CD8-positive, alpha-beta T cell (primary cell): ENCODE measurements at regions of chr9 and their contacts with region 1.

Region 1: DNA sequence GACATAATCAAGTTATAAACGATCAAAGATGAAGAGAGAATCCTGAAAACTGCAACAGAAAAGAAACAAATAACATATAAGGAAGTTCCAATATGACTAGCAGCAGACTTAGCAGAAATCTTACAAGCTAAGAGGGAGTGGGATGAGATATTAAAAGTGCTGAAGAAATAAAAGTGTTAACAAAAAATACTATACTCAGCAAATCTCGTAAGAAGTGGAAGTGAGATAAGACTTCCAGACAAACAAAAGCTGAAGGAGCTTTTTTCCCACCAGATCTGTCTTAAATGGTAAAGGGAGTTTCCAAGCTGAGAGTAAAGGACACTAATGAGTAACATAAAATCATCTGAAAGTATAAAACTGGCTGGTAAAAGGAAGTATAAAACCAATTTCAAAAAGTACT is 2036.0 kb upstream of the C9orf72 start:
- DNase-seq: no peak
- ATAC-seq: no peak
- H3K4me3 ChIP-seq: no peak overlapping the region
- H3K4me3 Mint-ChIP-seq: no peak overlapping the region
- H3K27ac ChIP-seq: no peak overlapping the region
- H3K27ac Mint-ChIP-seq: no peak overlapping the region
- H3K4me1 ChIP-seq: no peaks in the 10 kb centered on the region
- H3K4me1 Mint-ChIP-seq: no peaks in the 10 kb centered on the region
- H3K27me3 ChIP-seq: no peaks in the 10 kb centered on the region
- H3K27me3 Mint-ChIP-seq: no peaks in the 10 kb centered on the region
- CTCF ChIP-seq: no peak

Region 2: DNA sequence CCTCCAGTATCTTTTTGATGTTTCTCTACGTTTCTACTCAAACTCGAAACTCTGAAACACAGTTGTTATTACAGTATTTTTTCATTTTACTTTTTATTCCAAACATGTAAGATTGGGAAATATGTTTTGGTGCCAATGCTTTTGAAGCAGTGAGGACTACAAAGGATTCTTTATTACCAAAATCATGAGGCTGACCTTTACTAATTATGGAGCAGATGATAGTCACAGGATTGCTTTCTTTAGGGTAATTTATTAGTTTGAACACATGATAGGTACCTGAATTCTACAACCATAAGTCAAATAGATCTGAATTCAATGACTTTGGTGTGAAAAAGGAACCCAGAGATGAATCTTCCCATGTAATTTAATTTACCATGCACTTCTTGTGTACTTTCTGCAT is 20.9 kb before region 1 on chr9:
- CTCF ChIA-PET with region 1: no interaction called
- POLR2A ChIA-PET with region 1: no interaction called
- intact Hi-C with region 1: no loop called
- DNase-seq: no peak
- ATAC-seq: no peak
- H3K4me3 ChIP-seq: no peak overlapping the region
- H3K4me3 Mint-ChIP-seq: no peak overlapping the region
- H3K27ac ChIP-seq: no peak overlapping the region
- H3K27ac Mint-ChIP-seq: no peak overlapping the region
- H3K4me1 ChIP-seq: no peaks in the 10 kb centered on the region
- H3K4me1 Mint-ChIP-seq: no peaks in the 10 kb centered on the region
- H3K27me3 ChIP-seq: no peaks in the 10 kb centered on the region
- H3K27me3 Mint-ChIP-seq: no peaks in the 10 kb centered on the region
- CTCF ChIP-seq: no peak

Region 3: GRCh38 chr9:29648601-29649000 is 39.3 kb after region 1 on chr9:
- CTCF ChIA-PET with region 1: no interaction called
- POLR2A ChIA-PET with region 1: no interaction called
- intact Hi-C with region 1: loop called in 1 of 2 experiments (anchors 5 kb)
- DNase-seq: no peak
- ATAC-seq: no peak
- H3K4me3 ChIP-seq: no peak overlapping the region
- H3K4me3 Mint-ChIP-seq: no peak overlapping the region
- H3K27ac ChIP-seq: no peak overlapping the region
- H3K27ac Mint-ChIP-seq: no peak overlapping the region
- H3K4me1 ChIP-seq: no peaks in the 10 kb centered on the region
- H3K4me1 Mint-ChIP-seq: no peaks in the 10 kb centered on the region
- H3K27me3 ChIP-seq: no peaks in the 10 kb centered on the region
- H3K27me3 Mint-ChIP-seq: no peaks in the 10 kb centered on the region
- CTCF ChIP-seq: no peak

Region 4: GRCh38 chr9:30140407-30140806 is 531.1 kb after region 1 on chr9:
- CTCF ChIA-PET with region 1: no interaction called
- POLR2A ChIA-PET with region 1: no interaction called
- intact Hi-C with region 1: no loop called
- DNase-seq: no peak
- ATAC-seq: no peak
- H3K4me3 ChIP-seq: no peak overlapping the region
- H3K4me3 Mint-ChIP-seq: no peak overlapping the region
- H3K27ac ChIP-seq: no peak overlapping the region
- H3K27ac Mint-ChIP-seq: no peak overlapping the region
- H3K4me1 ChIP-seq: no peaks in the 10 kb centered on the region
- H3K4me1 Mint-ChIP-seq: no peaks in the 10 kb centered on the region
- H3K27me3 ChIP-seq: no peaks in the 10 kb centered on the region
- H3K27me3 Mint-ChIP-seq: no peaks in the 10 kb centered on the region
- CTCF ChIP-seq: no peak